Cardiac septum (tissue), 1 donor: ENCODE measurements at regions of chr9 and their contacts with region 1.

Region 1: DNA sequence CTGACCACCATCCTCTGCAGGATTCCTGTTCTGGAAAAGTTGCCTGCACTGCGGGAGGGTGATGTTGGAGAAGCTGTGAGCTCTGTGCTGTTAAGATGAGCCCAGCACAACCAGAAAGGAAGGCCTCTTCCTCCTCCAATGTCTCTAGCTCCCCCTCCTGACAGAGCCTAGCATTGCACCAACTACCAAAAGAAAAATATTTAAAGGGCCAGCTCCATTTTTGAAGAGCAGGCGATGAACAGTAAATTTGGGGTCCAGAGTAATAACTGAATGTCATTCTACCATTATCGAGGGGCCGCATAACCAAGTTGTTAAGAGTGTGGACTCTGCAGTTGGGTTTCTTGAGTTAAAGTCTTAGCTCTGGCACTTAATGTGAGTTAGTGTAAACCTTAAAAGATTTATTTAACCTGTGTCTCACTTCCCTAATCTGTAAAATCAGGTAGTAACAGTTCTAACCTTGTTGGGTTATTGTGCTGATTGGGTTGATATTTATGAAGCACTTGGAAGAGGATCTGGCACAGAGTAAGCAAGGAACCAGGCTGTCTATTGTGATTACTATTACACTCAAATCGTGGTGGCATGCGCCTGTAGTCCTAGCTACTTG is 3.9 kb downstream of the TEX53 start:
- DNase-seq: peak; percentile 75

Region 2: GRCh38 chr9:114405294-114406034 is 248.2 kb before region 1 on chr9:
- intact Hi-C with region 1: loop called (anchors 2 kb)
- DNase-seq: peak; percentile 86

Region 3: GRCh38 chr9:114437401-114437893 is 216.2 kb before region 1 on chr9:
- intact Hi-C with region 1: loop called (anchors 2 kb)
- DNase-seq: no peak

Region 4: GRCh38 chr9:114487607-114488300 is 165.9 kb before region 1 on chr9:
- intact Hi-C with region 1: loop called (anchors 5 kb)
- DNase-seq: no peak

Region 5: DNA sequence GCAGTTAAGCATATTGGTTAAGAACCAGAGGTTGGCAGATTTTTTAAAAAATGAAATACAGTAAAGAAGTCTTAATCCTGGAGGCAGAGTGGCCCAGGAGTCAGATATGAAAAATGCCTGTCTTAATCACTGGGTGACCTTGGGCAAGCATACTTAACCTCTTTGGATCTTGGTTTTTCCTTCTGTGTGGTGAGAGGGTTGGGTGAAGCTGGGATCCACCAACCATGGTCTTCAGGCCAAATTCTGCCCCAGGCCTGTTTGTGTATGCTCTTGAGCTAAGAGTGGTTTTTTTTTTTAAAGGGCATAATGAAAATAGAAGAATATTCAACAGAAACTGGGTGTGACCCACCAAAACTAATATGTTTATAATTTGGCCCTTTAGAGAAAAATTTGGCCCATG is 48.3 kb after region 1 on chr9:
- intact Hi-C with region 1: no loop called
- DNase-seq: no peak

Region 6: GRCh38 chr9:114856215-114856941 is 202.7 kb after region 1 on chr9:
- intact Hi-C with region 1: no loop called
- DNase-seq: no peak